ENCODE measurements at regions of chr12 and their contacts with region 1.

Region 1: DNA sequence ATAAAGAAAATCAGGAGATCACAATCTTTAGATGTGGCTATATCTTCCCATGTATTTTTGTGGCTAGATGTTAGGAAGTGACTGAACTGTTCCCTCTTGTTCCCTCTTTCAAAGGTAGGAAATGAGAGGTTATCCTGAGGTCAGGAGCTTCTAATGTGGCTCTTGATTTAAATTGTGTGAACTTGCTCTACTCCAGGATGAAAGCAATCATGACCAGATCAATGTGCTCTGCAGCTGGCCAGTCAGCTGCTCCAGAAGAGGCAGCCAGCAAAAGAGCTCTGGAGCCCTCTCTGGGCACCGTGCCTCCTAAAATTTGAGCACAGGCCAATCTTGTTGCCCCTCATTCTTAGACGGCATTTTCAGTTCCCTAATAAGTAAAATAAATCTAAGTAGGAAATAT is 32.0 kb downstream of the CDK17 start:
- DNase-seq: no peak
- H3K4me3 Mint-ChIP-seq: no peak overlapping the region
- H3K27ac Mint-ChIP-seq: no peak overlapping the region
- H3K4me1 Mint-ChIP-seq: peaks cover 46% of the 10 kb centered on the region
- H3K27me3 Mint-ChIP-seq: no peaks in the 10 kb centered on the region

Region 2: DNA sequence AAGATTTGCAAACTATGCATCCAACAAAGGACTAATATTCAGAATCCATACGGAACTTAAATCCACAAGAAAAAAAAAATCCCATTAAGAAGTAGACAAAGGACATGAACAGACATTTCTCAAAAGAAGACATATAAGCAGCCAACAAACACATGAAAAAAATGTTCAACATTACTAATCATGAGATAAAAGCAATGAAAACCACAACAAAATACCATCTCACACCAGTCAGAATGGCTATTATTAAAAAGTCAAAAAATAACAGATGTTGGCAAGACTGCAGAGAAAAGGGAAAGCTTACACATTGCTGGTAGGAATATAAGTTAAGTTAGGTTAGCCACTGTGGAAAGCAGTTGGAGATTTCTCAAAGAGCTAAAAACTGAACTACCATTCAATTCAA is 15.8 kb after region 1 on chr12:
- intact Hi-C with region 1: loop called (anchors 2 kb)
- DNase-seq: no peak
- H3K4me3 Mint-ChIP-seq: no peak overlapping the region
- H3K27ac Mint-ChIP-seq: no peak overlapping the region
- H3K4me1 Mint-ChIP-seq: peaks cover 61% of the 10 kb centered on the region
- H3K27me3 Mint-ChIP-seq: no peaks in the 10 kb centered on the region

Measured in activated T-helper 1 cell treated with anti-CD3 and anti-CD28 coated beads, Interleukin-12 subunit alpha, Interleukin-12 subunit beta, Interleukin-2, Interleukin-4 antibody, amounts not matched to agents 30 ng/mL and 10 ng/mL and 1 ng/mL, durations not matched to agents 14 hours and 24 hours and 36 hours (primary cell).